CD14-positive monocyte (primary cell): ENCODE measurements at regions of chr7 and their contacts with region 1.

Region 1: DNA sequence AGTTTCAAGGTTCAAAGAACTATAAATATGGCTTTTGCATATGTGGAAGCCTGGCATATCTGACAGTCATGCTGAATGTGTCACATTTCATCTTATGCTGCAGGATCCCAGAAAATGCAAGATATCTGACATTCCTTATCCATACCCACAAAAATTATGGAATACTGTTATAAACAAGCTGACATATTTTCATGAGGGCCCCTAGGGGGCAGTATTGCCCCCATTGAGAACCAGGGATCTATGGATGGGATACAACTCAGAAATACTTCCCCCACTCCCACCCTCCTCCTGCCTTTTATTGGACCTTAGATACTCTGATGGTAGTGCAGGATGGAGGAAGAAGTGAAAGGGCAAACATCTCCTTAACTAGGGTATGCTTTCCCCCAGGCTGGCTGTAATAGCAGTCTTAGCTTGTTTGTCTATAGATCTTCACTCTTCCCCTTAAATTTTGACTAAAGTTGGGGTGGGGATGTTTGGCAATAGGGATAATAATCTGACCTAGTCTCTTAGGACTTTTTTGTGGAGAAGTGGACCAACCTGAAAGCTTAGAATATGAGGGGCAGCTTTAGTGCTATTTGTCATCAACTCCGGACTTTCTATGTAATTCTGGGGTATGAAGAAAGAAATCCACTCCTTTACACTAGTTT is 3.5 kb upstream of the GNGT1 start:
- DNase-seq: peak in 2 of 3 donors; percentile 1 to 24
- H3K4me3 ChIP-seq: no peak overlapping the region
- H3K4me3 Mint-ChIP-seq: no peak overlapping the region
- H3K27ac ChIP-seq: no peak overlapping the region
- H3K27ac Mint-ChIP-seq: no peak overlapping the region
- H3K4me1 ChIP-seq: no peaks in the 10 kb centered on the region
- H3K4me1 Mint-ChIP-seq: no peaks in the 10 kb centered on the region
- H3K27me3 ChIP-seq: no peaks in the 10 kb centered on the region
- H3K27me3 Mint-ChIP-seq: peaks cover 9 to 13% (median 11%) of the 10 kb centered on the region in 3 donors
- CTCF ChIP-seq: peak; percentile 87

Region 2: GRCh38 chr7:93828260-93828659 is 74.6 kb before region 1 on chr7:
- intact Hi-C with region 1: no loop called
- DNase-seq: no peak
- H3K4me3 ChIP-seq: no peak overlapping the region
- H3K4me3 Mint-ChIP-seq: no peak overlapping the region
- H3K27ac ChIP-seq: no peak overlapping the region
- H3K27ac Mint-ChIP-seq: no peak overlapping the region
- H3K4me1 ChIP-seq: no peaks in the 10 kb centered on the region
- H3K4me1 Mint-ChIP-seq: no peaks in the 10 kb centered on the region
- H3K27me3 ChIP-seq: no peaks in the 10 kb centered on the region
- H3K27me3 Mint-ChIP-seq: peaks cover 0 to 2% (median 0%) of the 10 kb centered on the region in 3 donors
- CTCF ChIP-seq: no peak

Region 3: GRCh38 chr7:93851536-93851935 is 51.4 kb before region 1 on chr7:
- intact Hi-C with region 1: no loop called
- DNase-seq: no peak
- H3K4me3 ChIP-seq: no peak overlapping the region
- H3K4me3 Mint-ChIP-seq: no peak overlapping the region
- H3K27ac ChIP-seq: no peak overlapping the region
- H3K27ac Mint-ChIP-seq: no peak overlapping the region
- H3K4me1 ChIP-seq: no peaks in the 10 kb centered on the region
- H3K4me1 Mint-ChIP-seq: no peaks in the 10 kb centered on the region
- H3K27me3 ChIP-seq: no peaks in the 10 kb centered on the region
- H3K27me3 Mint-ChIP-seq: peaks cover 0 to 1% (median 0%) of the 10 kb centered on the region in 3 donors
- CTCF ChIP-seq: no peak

Region 4: GRCh38 chr7:94028768-94029167 is 125.9 kb after region 1 on chr7:
- intact Hi-C with region 1: no loop called
- DNase-seq: peak in 1 of 3 donors; percentile 23
- H3K4me3 ChIP-seq: no peak overlapping the region
- H3K4me3 Mint-ChIP-seq: no peak overlapping the region
- H3K27ac ChIP-seq: no peak overlapping the region
- H3K27ac Mint-ChIP-seq: no peak overlapping the region
- H3K4me1 ChIP-seq: no peaks in the 10 kb centered on the region
- H3K4me1 Mint-ChIP-seq: peaks cover 2% of the 10 kb centered on the region
- H3K27me3 ChIP-seq: no peaks in the 10 kb centered on the region
- H3K27me3 Mint-ChIP-seq: peaks cover 3 to 5% (median 4%) of the 10 kb centered on the region in 3 donors
- CTCF ChIP-seq: no peak

Region 5: GRCh38 chr7:94395141-94396036 is 492.5 kb after region 1 on chr7:
- intact Hi-C with region 1: loop called in 1 of 2 experiments (anchors 5 kb)
- DNase-seq: peak; percentile 16 to 44 (median 18)
- H3K4me3 ChIP-seq: no peak overlapping the region
- H3K4me3 Mint-ChIP-seq: peak overlapping the region in 1 of 2 donors; percentile 70
- H3K27ac ChIP-seq: no peak overlapping the region
- H3K27ac Mint-ChIP-seq: no peak overlapping the region
- H3K4me1 ChIP-seq: peaks cover 0 to 4% of the 10 kb centered on the region in 2 donors
- H3K4me1 Mint-ChIP-seq: peaks cover 14% of the 10 kb centered on the region
- H3K27me3 ChIP-seq: peaks cover 9 to 32% of the 10 kb centered on the region in 2 donors
- H3K27me3 Mint-ChIP-seq: peaks cover 26 to 36% (median 29%) of the 10 kb centered on the region in 3 donors
- CTCF ChIP-seq: peak; percentile 81